ENCODE measurements at regions of chr5 and their contacts with region 1.

Region 1: GRCh38 chr5:168404365-168404764 is 81.9 kb upstream of the RARS1 start:
- DNase-seq: peak; percentile 94
- H3K4me3 ChIP-seq: no peak overlapping the region
- CTCF ChIP-seq: peak; percentile 9

Region 2: GRCh38 chr5:168324860-168325630 is 79.3 kb before region 1 on chr5:
- in situ Hi-C with region 1: loop called (anchors 5 kb)
- DNase-seq: no peak
- H3K4me3 ChIP-seq: no peak overlapping the region
- CTCF ChIP-seq: no peak

Region 3: GRCh38 chr5:168353216-168353957 is 51.0 kb before region 1 on chr5:
- in situ Hi-C with region 1: loop called (anchors 5 kb)
- DNase-seq: no peak
- H3K4me3 ChIP-seq: no peak overlapping the region
- CTCF ChIP-seq: no peak